ENCODE measurements at regions of chr14 and their contacts with region 1.

Region 1: DNA sequence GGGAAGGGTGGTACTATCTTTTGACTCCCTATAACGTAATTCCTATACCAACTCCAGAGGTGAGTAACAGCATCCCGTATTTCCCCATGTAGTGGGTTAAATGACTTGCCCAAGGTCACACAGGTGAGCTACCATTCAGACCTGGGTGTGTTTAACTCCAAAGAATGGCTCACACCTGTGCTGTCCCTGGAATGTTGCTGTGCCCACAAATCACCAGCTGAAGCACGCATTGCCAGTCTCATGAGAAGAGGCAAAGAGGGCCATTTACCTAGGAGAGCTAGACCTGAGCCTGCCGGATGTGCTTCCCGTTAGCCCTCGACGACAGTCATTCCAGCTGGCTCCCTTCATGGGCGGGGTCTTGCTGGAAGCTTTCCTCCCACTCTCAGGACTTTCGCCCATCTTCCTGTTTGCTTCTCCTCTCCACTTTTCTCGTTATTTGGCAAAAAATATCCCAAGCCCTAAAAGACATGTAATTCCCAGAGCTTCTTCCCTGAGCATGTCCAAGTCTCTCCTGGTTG is 106.6 kb upstream of the VASH1 start:
- DNase-seq: peak; percentile 69
- H3K4me3 ChIP-seq: no peak overlapping the region
- H3K27ac ChIP-seq: no peak overlapping the region
- H3K4me1 ChIP-seq: peaks cover 5% of the 10 kb centered on the region
- H3K27me3 ChIP-seq: no peaks in the 10 kb centered on the region
- CTCF ChIP-seq: no peak

Region 2: DNA sequence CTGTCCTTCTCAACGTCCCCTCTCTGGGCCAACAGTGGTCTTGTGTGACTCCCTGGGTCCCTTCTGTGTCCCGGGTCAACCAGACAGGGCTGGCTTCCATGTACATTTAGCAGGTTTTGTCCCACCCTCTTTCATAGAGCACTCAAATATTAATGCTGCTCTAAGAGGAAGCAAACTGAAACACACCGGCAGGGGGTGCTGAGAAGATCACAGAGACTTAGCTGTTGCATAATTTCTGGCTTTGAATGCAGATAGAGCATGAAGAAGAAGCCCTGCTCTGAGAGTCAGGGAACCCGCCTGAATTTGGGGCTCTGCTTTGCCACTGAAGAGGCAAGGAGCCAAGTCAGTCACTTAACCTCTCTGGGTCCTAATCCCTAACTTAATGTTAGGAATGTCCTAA is 140.0 kb before region 1 on chr14:
- CTCF ChIA-PET with region 1: no interaction called
- dilution Hi-C with region 1: no loop called
- in situ Hi-C with region 1: loop called in 1 of 2 experiments (anchors 10 kb)
- intact Hi-C with region 1: no loop called
- DNase-seq: peak; percentile 46
- H3K4me3 ChIP-seq: no peak overlapping the region
- H3K27ac ChIP-seq: no peak overlapping the region
- H3K4me1 ChIP-seq: peaks cover 11% of the 10 kb centered on the region
- H3K27me3 ChIP-seq: no peaks in the 10 kb centered on the region
- CTCF ChIP-seq: peak; percentile 62 to 74